Activated naive CD4-positive, alpha-beta T cell treated with anti-CD3 and anti-CD28 coated beads for 36 hours (primary cell): ENCODE measurements at regions of chr5 and their contacts with region 1.

Region 1: DNA sequence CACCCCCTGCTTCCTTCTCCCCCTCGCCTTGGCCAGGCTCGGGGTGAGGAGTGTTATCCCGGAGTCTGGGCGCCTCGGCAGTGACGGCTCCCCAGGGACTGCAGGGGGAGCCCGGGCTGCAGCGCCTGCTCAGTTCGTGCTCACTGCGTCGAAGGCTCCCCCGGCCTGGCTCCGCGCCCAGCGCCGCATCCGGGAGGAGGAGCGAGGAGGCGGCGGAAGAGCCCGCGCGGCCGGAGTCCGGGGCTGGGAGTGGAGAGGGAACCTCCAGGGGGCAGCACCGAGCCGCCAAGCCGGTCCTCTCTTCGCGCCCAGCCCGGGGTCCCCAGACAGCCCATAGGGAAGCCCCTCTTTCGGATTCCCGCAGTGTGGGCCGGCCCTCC is 1.3 kb upstream of the EGR1 start:
- DNase-seq: peak; percentile 95
- H3K4me3 Mint-ChIP-seq: peak overlapping the region; percentile 83
- H3K27ac Mint-ChIP-seq: peak overlapping the region; percentile 93
- H3K4me1 Mint-ChIP-seq: peaks cover 59% of the 10 kb centered on the region
- H3K27me3 Mint-ChIP-seq: no peaks in the 10 kb centered on the region

Region 2: GRCh38 chr5:138213161-138214029 is 250.6 kb before region 1 on chr5 and contains the start of gene CDC23:
- CTCF ChIA-PET with region 1: no interaction called
- intact Hi-C with region 1: loop called (anchors 1 kb)
- DNase-seq: peak; percentile 96
- H3K4me3 Mint-ChIP-seq: peak within 1 kb of the TSS; percentile 98
- H3K27ac Mint-ChIP-seq: peak within 1 kb of the TSS; percentile 89
- H3K4me1 Mint-ChIP-seq: peaks cover 18% of the 10 kb centered on the region
- H3K27me3 Mint-ChIP-seq: no peaks in the 10 kb centered on the region
- total RNA-seq, gene CDC23: 44.3 to 47.2 TPM

Region 3: DNA sequence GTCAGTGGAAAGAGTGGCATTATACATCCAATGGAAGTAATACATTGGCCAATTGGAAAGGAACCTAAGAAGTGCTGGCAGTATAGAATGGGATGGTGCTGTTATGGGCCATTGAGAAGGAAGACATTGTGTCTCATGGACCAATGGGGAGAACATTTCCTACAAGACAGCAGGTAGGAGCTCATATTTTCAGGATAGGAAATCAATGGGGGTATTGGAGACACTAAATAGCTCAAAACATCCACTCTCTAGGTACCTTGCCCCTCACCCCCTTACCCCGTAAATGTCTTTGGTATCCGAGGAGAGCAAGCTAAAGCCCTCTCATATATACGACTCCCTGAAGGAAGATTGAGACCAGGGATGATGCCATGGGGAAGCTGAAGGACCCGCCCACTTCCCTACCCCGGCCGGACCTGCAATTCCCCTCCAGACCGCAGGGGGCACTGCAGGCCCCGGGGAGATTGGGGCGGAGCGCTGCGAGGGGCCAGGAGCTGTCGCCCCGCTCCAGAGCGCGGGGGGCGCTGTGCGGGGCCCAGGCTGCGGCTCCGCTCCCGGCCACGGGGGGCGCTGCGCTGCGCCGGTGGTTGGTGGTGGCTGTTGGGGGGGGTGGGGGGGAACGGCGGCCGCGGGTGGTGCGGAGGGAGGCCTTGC is 111.8 kb before region 1 on chr5 and contains the start of gene KDM3B:
- CTCF ChIA-PET with region 1: interaction called, 8 read pairs
- intact Hi-C with region 1: loop called (anchors 1 kb)
- DNase-seq: peak; percentile 91
- H3K4me3 Mint-ChIP-seq: peak within 1 kb of the TSS; percentile 96
- H3K27ac Mint-ChIP-seq: peak within 1 kb of the TSS; percentile 94
- H3K4me1 Mint-ChIP-seq: peaks cover 37% of the 10 kb centered on the region
- H3K27me3 Mint-ChIP-seq: no peaks in the 10 kb centered on the region
- total RNA-seq, gene KDM3B: 33.4 to 36.2 TPM

Region 4: DNA sequence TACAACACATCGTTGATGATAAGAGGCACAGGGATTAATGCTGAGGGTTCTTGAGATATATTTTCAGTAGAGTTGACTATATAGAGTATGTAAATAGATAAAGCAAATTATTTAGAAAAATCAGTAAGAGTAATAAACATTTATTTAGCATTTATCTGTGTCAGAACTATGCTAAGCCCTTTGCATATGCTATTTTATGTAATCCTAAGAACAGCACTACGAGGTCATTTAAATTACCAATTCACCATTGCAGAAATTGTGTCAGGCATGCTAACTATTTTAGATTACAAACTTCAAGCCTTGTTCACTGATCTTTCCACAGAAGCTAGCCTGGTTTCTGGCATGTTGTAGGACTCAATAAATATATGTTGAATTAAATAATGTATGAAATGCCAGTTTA is 45.6 kb before region 1 on chr5:
- CTCF ChIA-PET with region 1: no interaction called
- intact Hi-C with region 1: no loop called
- DNase-seq: no peak
- H3K4me3 Mint-ChIP-seq: no peak overlapping the region
- H3K27ac Mint-ChIP-seq: no peak overlapping the region
- H3K4me1 Mint-ChIP-seq: no peaks in the 10 kb centered on the region
- H3K27me3 Mint-ChIP-seq: no peaks in the 10 kb centered on the region

Region 5: GRCh38 chr5:138491669-138492559 is 27.9 kb after region 1 on chr5:
- CTCF ChIA-PET with region 1: interaction called, 6 read pairs
- intact Hi-C with region 1: loop called (anchors 1 kb)
- DNase-seq: peak; percentile 85
- H3K4me3 Mint-ChIP-seq: peak overlapping the region; percentile 89
- H3K27ac Mint-ChIP-seq: no peak overlapping the region
- H3K4me1 Mint-ChIP-seq: peaks cover 11% of the 10 kb centered on the region
- H3K27me3 Mint-ChIP-seq: peaks cover 11% of the 10 kb centered on the region

Region 6: DNA sequence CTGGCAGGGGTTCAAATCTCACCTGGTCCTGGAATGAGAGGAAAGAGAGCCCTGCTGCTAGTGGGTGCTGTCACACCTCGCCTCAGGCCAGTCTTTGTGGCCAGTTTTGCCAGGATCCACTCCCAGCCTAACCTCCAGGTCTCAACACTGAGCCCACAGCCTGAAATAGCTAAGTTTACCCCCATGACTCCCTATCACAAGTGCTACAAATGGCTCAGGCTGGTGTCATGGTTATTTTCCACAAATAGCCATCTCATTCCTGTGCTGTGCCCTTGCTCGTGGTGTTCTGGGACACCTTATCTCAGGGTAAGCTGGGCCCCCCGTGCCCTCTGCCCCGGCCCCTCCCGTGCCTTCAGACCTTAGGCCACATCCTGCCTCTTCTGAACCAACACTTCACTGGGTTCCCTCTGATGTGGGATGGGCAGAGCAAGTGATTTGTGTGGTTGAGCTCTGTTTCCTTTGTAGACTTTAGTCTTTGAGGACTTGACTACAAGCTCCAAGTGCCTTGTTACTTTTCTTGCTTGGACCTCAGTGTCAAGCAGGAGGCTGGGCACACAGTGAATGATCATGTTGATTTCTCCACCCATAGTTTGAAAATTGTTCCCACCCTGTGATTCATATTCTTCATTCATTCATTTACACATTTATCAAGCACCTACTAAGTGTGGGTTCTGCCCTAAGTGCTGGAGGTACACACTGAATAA is 204.5 kb after region 1 on chr5:
- CTCF ChIA-PET with region 1: no interaction called
- intact Hi-C with region 1: no loop called
- DNase-seq: peak; percentile 52
- H3K4me3 Mint-ChIP-seq: no peak overlapping the region
- H3K27ac Mint-ChIP-seq: no peak overlapping the region
- H3K4me1 Mint-ChIP-seq: peaks cover 19% of the 10 kb centered on the region
- H3K27me3 Mint-ChIP-seq: peaks cover 69% of the 10 kb centered on the region

Region 7: DNA sequence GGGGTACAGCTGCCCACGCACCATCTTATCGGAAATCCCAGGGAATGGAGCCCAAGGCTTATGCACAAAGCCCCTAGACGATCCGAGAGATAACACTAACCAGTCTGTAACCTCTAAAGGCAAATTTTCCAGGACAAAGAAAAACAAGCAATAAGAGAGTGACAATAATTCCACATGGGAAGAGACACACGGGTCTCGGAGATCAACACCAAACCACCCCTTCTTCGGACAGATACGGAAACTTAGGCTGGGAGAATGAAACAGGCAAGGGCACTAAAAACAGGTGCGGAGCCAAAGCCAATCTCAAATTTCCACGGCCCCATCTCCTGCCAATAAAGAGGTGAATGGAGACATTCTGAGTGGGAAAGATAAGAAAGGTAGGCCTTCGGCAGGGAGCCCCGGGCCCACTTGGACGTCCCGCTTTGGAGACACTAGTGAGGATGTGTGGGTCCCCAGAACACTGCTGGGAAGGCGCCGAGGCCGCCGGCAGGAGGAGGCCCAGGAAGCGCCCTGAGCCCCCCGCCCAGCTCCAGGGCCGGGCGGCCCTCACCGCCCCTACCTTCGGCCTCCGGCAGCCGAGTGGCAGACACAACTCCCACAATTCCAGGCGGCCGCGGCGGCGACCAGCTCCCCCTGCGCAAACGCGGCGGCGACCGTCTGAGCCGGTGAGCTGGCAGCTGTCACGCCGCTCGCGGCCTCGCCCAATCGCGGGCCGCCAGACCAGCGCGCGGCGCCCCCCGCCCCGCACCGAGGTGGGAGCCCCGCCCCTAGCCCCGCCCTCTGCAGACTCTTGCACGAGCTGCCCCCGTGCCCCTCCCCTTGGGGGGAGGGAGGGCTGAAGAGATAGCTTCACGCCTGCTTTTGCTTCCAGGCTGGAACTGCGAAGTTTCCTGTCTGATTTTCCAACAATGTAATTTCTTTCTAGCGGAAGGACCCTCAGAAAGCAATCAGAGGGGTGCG is 734.0 kb after region 1 on chr5 and contains the start of gene SIL1:
- CTCF ChIA-PET with region 1: no interaction called
- intact Hi-C with region 1: loop called (anchors 10 kb)
- DNase-seq: peak; percentile 97
- H3K4me3 Mint-ChIP-seq: peak within 1 kb of the TSS; percentile 89
- H3K27ac Mint-ChIP-seq: peak within 1 kb of the TSS; percentile 82
- H3K4me1 Mint-ChIP-seq: peaks cover 27% of the 10 kb centered on the region
- H3K27me3 Mint-ChIP-seq: no peaks in the 10 kb centered on the region
- total RNA-seq, gene SIL1: 21.4 to 29.6 TPM